Adrenal gland (tissue), 19 donors: ENCODE measurements at regions of chr5 and their contacts with region 1.

Region 1: DNA sequence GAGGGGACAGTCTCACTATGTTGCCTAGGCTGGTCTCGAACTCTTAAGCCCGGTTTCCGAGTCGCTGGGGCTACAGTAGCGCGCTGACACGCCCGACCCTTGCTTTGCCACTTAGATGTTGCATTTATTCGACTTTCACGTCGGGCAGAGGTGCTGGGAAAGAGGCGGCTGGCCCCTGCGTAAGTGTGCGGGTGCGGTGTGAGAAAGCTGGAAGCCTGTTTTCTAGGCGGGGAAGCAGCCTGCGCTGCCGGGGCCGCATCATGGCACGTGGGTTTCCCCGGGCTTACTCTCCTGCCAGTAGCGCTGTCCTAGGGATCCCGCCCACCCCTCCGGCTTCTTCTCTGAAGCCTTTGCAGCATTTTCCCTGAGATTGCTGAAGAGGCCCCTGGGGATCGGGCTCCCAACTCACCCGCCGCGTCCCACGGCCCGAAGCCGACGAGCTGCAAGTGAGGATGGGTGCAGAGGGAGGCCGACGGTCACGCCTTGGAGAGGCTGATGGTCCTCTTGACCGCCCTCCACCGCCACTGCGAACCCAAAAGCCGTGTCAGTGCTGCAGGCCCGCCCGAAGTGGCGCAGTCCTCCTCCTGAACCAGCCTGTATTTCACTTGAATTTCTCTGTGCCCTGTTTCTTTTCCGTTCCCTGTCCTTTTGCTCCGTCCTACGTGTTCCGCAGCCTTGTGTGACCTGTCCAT is 5.8 kb upstream of the TRIM41 start:
- DNase-seq: peak in 3 of 7 donors; percentile 31 to 47 (median 46)
- H3K4me3 ChIP-seq: peak overlapping the region in 2 of 4 donors; percentile 13 to 40
- H3K27ac ChIP-seq: peak overlapping the region in 2 of 5 donors; percentile 7 to 61
- H3K4me1 ChIP-seq: peaks cover 0 to 12% of the 10 kb centered on the region in 2 donors
- H3K27me3 ChIP-seq: no peaks in the 10 kb centered on the region
- CTCF ChIP-seq: no peak
- POLR2A ChIP-seq: no peak

Region 2: GRCh38 chr5:181020688-181021087 is 196.6 kb before region 1 on chr5:
- intact Hi-C with region 1: no loop called
- DNase-seq: no peak
- H3K4me3 ChIP-seq: no peak overlapping the region
- H3K27ac ChIP-seq: no peak overlapping the region
- H3K4me1 ChIP-seq: no peaks in the 10 kb centered on the region
- H3K27me3 ChIP-seq: no peaks in the 10 kb centered on the region
- CTCF ChIP-seq: no peak
- POLR2A ChIP-seq: no peak

Region 3: DNA sequence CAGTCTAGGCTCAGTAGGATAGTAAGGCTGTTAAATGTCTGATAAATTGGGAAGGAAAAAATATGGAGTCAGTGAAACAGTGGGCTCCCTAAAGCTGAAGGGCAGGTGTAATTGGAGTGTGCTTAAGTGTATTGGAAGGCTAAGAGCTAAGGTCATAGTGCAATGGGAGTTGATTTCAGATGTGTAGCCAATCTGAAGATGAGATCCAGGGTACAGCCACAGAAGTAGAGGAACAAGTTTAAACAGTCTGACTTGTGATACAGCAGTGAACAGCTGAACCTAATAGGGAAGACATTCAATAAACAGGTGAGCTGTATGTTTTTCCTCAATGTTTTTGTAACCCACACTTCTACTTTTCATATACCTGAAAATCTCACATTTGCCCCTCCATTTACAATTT is 37.5 kb after region 1 on chr5:
- intact Hi-C with region 1: loop called in 1 of 2 experiments (anchors 5 kb)
- DNase-seq: no peak
- H3K4me3 ChIP-seq: no peak overlapping the region
- H3K27ac ChIP-seq: peak overlapping the region in 1 of 5 donors; percentile 32
- H3K4me1 ChIP-seq: peaks cover 23 to 77% of the 10 kb centered on the region in 2 donors
- H3K27me3 ChIP-seq: no peaks in the 10 kb centered on the region
- CTCF ChIP-seq: no peak
- POLR2A ChIP-seq: no peak